ENCODE measurements at regions of chr14 and their contacts with region 1.

Region 1: GRCh38 chr14:20855652-20856291 is 35.4 kb upstream of the RNASE3 start:
- DNase-seq: peak; percentile 78
- H3K4me3 ChIP-seq: no peak overlapping the region
- H3K27ac ChIP-seq: no peak overlapping the region
- H3K4me1 ChIP-seq: no peaks in the 10 kb centered on the region
- H3K27me3 ChIP-seq: peaks cover 29% of the 10 kb centered on the region
- CTCF ChIP-seq: peak; percentile 70

Region 2: GRCh38 chr14:20697273-20698017 is 158.3 kb before region 1 on chr14:
- CTCF ChIA-PET with region 1: interaction called, 10 read pairs
- POLR2A ChIA-PET with region 1: no interaction called
- intact Hi-C with region 1: loop called (anchors 1 kb)
- DNase-seq: peak; percentile 77
- H3K4me3 ChIP-seq: no peak overlapping the region
- H3K27ac ChIP-seq: no peak overlapping the region
- H3K4me1 ChIP-seq: no peaks in the 10 kb centered on the region
- H3K27me3 ChIP-seq: no peaks in the 10 kb centered on the region
- CTCF ChIP-seq: peak; percentile 77

Region 3: DNA sequence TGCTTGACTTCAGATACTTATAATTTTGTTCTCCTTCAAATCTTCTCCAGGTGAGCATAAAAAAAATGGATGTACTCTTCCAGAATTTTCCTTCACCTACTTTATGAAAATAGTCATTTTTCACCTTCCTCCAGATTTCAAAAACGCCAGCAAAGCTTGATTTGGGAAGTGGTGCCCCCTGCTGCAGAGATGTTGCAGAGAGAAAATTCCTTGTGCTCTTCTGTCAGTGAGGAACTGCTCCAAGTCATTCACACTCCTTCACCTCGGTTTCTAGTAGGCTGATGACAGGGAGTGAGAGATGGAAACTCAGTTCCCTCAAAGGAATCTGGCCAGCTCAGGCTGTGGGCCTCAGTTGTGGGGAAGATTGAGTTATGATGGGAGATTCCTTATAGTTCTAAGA is 11.2 kb after region 1 on chr14:
- CTCF ChIA-PET with region 1: interaction called, 13 read pairs
- POLR2A ChIA-PET with region 1: no interaction called
- intact Hi-C with region 1: loop called (anchors 2 kb)
- DNase-seq: peak; percentile 15
- H3K4me3 ChIP-seq: no peak overlapping the region
- H3K27ac ChIP-seq: no peak overlapping the region
- H3K4me1 ChIP-seq: no peaks in the 10 kb centered on the region
- H3K27me3 ChIP-seq: no peaks in the 10 kb centered on the region
- CTCF ChIP-seq: peak; percentile 63

Region 4: DNA sequence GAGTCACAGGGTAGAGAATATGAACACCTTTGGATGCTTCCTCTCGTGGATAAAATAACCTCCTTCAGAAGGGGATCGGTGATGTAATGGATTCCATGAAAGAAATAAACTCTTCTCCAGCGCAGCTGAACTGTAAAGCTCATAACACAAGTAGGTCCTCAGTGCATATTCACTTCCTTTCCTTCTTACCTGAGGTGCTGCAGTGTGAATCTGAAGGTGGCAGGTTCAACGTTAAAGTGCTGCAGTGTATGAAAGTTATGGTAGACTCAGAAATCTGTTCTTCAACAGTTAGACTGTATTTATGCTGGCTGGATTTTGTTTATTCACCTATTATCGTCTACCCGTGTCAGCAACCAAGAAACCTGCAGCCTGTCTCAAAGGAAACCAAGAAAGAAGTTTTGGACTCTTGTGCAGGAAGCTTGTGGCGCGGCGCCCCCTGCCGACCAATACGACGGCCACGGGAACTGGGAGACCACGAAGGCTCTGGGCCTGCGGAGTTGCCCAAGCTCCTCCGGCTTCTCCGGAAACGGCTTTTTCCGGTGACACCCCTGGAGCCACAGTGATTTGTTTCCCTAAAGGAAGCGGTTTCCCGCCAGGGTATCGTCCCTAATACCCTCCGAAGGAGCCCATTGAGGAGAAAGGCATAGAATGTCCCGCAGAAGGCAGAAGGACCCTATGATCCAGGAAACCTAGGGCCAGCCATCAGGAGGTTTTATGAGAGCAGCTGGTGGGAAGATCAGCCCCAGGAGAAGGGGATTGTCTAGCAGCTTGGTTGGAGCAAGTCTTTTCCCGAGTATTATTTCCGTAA is 17.8 kb after region 1 on chr14:
- CTCF ChIA-PET with region 1: interaction called, 6 read pairs
- POLR2A ChIA-PET with region 1: no interaction called
- intact Hi-C with region 1: loop called (anchors 2 kb)
- DNase-seq: peak; percentile 97
- H3K4me3 ChIP-seq: peak overlapping the region; percentile 30
- H3K27ac ChIP-seq: peak overlapping the region; percentile 25
- H3K4me1 ChIP-seq: peaks cover 4% of the 10 kb centered on the region
- H3K27me3 ChIP-seq: peaks cover 13% of the 10 kb centered on the region
- CTCF ChIP-seq: peak; percentile 98

Region 5: GRCh38 chr14:21103710-21104447 is 248.1 kb after region 1 on chr14:
- CTCF ChIA-PET with region 1: no interaction called
- POLR2A ChIA-PET with region 1: no interaction called
- intact Hi-C with region 1: loop called (anchors 5 kb)
- DNase-seq: peak; percentile 99
- H3K4me3 ChIP-seq: peak overlapping the region; percentile 92
- H3K27ac ChIP-seq: peak overlapping the region; percentile 100
- H3K4me1 ChIP-seq: peaks cover 30% of the 10 kb centered on the region
- H3K27me3 ChIP-seq: no peaks in the 10 kb centered on the region
- CTCF ChIP-seq: peak; percentile 84